Activated naive CD4-positive, alpha-beta T cell treated with anti-CD3 and anti-CD28 coated beads for 36 hours (primary cell): ENCODE measurements at regions of chr6 and their contacts with region 1.

Region 1: DNA sequence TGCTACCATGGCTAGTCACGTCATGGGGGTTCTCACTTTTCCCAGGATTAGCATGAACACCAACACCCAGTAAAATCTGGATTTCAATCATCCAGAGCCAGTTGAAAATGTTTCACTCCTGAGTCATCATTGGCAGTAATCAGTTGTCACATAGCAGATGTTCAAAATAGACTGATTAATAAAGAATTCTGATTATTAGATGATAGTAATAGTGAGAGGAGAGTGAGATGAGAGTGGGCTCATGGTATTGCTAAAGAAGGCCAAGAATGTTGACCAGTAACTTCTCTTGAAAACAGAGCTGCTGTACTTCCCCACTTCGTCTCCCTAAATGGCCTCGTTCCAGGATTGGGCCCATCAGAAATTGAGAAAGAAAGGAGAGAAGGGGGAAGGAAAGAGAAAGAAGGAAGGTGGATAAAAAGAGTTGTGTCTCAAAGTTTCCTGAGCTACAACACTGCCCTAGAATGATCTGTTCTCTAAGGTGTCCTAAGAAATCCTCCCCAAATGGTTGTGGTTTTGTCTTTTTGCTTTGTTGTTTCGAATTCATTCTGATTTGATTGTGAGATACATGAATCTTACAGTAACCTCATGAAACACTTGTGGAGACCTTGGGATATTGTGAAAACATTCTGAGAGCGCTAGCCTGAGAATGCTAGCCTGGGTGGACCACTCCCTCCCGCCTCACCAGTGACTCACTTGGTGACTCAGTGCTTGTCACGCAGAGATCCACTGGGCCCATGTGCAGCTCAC is 502.2 kb upstream of the JARID2 start:
- DNase-seq: peak; percentile 92
- H3K4me3 Mint-ChIP-seq: no peak overlapping the region
- H3K27ac Mint-ChIP-seq: peak overlapping the region; percentile 98
- H3K4me1 Mint-ChIP-seq: peaks cover 69% of the 10 kb centered on the region
- H3K27me3 Mint-ChIP-seq: no peaks in the 10 kb centered on the region

Region 2: GRCh38 chr6:14660806-14661579 is 82.6 kb before region 1 on chr6:
- CTCF ChIA-PET with region 1: no interaction called
- intact Hi-C with region 1: no loop called
- DNase-seq: peak; percentile 71
- H3K4me3 Mint-ChIP-seq: no peak overlapping the region
- H3K27ac Mint-ChIP-seq: no peak overlapping the region
- H3K4me1 Mint-ChIP-seq: peaks cover 44% of the 10 kb centered on the region
- H3K27me3 Mint-ChIP-seq: no peaks in the 10 kb centered on the region

Region 3: GRCh38 chr6:14674458-14674857 is 69.2 kb before region 1 on chr6:
- CTCF ChIA-PET with region 1: no interaction called
- intact Hi-C with region 1: loop called (anchors 2 kb)
- DNase-seq: peak; percentile 12
- H3K4me3 Mint-ChIP-seq: no peak overlapping the region
- H3K27ac Mint-ChIP-seq: peak overlapping the region; percentile 80
- H3K4me1 Mint-ChIP-seq: peaks cover 19% of the 10 kb centered on the region
- H3K27me3 Mint-ChIP-seq: no peaks in the 10 kb centered on the region

Region 4: GRCh38 chr6:14857501-14857900 is 113.9 kb after region 1 on chr6:
- CTCF ChIA-PET with region 1: no interaction called
- intact Hi-C with region 1: loop called (anchors 1 kb)
- DNase-seq: peak; percentile 79
- H3K4me3 Mint-ChIP-seq: peak overlapping the region; percentile 36
- H3K27ac Mint-ChIP-seq: peak overlapping the region; percentile 91
- H3K4me1 Mint-ChIP-seq: peaks cover 28% of the 10 kb centered on the region
- H3K27me3 Mint-ChIP-seq: no peaks in the 10 kb centered on the region

Region 5: GRCh38 chr6:14867802-14868201 is 124.2 kb after region 1 on chr6:
- CTCF ChIA-PET with region 1: no interaction called
- intact Hi-C with region 1: no loop called
- DNase-seq: no peak
- H3K4me3 Mint-ChIP-seq: no peak overlapping the region
- H3K27ac Mint-ChIP-seq: no peak overlapping the region
- H3K4me1 Mint-ChIP-seq: peaks cover 15% of the 10 kb centered on the region
- H3K27me3 Mint-ChIP-seq: no peaks in the 10 kb centered on the region

Region 6: DNA sequence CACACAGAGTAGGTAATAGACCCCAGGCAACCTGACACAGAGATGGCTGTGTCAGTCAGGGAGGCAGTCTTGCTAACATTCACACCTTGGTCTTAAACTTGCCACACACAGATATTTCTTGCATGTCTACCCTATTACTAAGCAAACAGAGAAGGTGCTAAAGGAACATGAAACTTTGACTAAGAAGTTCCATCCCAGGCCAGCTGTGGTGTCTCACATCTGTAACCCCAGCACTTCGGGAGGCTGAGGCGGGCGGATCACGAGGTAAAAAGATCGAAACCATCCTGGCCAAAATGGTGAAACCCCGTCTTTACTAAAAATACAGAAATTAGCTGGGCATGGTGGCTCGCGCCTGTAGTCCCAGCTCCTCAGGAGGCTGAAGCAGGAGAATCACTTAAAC is 279.8 kb after region 1 on chr6:
- CTCF ChIA-PET with region 1: no interaction called
- intact Hi-C with region 1: loop called (anchors 1 kb)
- DNase-seq: peak; percentile 78
- H3K4me3 Mint-ChIP-seq: no peak overlapping the region
- H3K27ac Mint-ChIP-seq: peak overlapping the region; percentile 84
- H3K4me1 Mint-ChIP-seq: peaks cover 20% of the 10 kb centered on the region
- H3K27me3 Mint-ChIP-seq: peaks cover 3% of the 10 kb centered on the region